A673 (cell line): ENCODE measurements at regions of chr16 and their contacts with region 1.

Region 1: GRCh38 chr16:19463926-19464325 is 46.2 kb downstream of the TMC5 start:
- DNase-seq: no peak
- H3K4me3 ChIP-seq: no peak overlapping the region
- H3K27ac ChIP-seq: peak overlapping the region; percentile 57
- H3K4me1 ChIP-seq: no peaks in the 10 kb centered on the region
- H3K27me3 ChIP-seq: no peaks in the 10 kb centered on the region
- CTCF ChIP-seq: no peak

Region 2: GRCh38 chr16:19094541-19095365 is 369.2 kb before region 1 on chr16:
- CTCF ChIA-PET with region 1: no interaction called
- POLR2A ChIA-PET with region 1: interaction called, 10 read pairs
- intact Hi-C with region 1: no loop called
- DNase-seq: no peak
- H3K4me3 ChIP-seq: no peak overlapping the region
- H3K27ac ChIP-seq: no peak overlapping the region
- H3K4me1 ChIP-seq: no peaks in the 10 kb centered on the region
- H3K27me3 ChIP-seq: no peaks in the 10 kb centered on the region
- CTCF ChIP-seq: peak; percentile 36; the same call in 1 of the 2 replicates

Region 3: GRCh38 chr16:19356024-19356952 is 107.6 kb before region 1 on chr16:
- CTCF ChIA-PET with region 1: no interaction called
- POLR2A ChIA-PET with region 1: no interaction called
- intact Hi-C with region 1: no loop called
- DNase-seq: no peak
- H3K4me3 ChIP-seq: no peak overlapping the region
- H3K27ac ChIP-seq: no peak overlapping the region
- H3K4me1 ChIP-seq: no peaks in the 10 kb centered on the region
- H3K27me3 ChIP-seq: no peaks in the 10 kb centered on the region
- CTCF ChIP-seq: no peak